SK-N-SH (cell line): ENCODE measurements at regions of chr2 and their contacts with region 1.

Region 1: DNA sequence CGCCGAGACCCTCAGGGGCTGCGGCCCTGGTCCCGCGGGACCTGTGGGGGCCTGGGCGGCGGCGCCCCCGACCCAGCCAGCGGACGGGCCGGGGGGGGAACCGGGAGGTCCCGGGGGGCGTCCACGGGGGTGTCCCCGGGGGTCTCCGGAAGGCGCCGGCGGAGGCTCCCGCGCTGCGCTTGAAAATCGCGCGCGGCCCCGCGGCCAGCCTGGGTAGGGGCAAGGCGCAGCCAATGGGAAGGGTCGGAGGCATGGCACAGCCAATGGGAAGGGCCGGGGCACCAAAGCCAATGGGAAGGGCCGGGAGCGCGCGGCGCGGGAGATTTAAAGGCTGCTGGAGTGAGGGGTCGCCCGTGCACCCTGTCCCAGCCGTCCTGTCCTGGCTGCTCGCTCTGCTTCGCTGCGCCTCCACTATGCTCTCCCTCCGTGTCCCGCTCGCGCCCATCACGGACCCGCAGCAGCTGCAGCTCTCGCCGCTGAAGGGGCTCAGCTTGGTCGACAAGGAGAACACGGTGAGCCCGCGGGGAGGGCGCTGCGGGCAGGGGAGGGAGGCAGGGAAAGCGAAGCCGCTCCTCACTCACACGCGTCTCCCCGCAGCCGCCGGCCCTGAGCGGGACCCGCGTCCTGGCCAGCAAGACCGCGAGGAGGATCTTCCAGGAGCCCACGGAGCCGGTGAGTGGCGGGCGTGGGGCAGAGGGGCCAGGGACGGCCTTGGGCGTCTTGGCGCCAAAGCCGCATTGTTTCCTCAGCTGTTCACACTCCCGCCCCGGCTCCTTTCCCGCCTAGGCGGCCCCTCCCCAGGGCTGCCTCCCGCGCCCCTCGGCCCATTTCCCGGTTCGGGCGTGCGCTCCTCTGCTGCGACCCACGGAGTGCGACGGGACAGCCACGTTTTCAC is at the start of gene RRM2:
- DNase-seq: peak; percentile 99
- H3K4me3 ChIP-seq: peak within 1 kb of the TSS; percentile 63 to 69
- H3K27ac ChIP-seq: peak within 1 kb of the TSS; percentile 84 to 87
- H3K4me1 ChIP-seq: peaks cover 12 to 30% of the 10 kb centered on the region in 2 experiments; a peak in 3 of 4 replicates
- H3K27me3 ChIP-seq: no peaks in the 10 kb centered on the region
- CTCF ChIP-seq: no peak
- EP300 ChIP-seq: no peak
- RAD21 ChIP-seq: no peak
- polyA plus RNA-seq, gene RRM2: 23.6 and 38.9 TPM in 2 replicates

Region 2: DNA sequence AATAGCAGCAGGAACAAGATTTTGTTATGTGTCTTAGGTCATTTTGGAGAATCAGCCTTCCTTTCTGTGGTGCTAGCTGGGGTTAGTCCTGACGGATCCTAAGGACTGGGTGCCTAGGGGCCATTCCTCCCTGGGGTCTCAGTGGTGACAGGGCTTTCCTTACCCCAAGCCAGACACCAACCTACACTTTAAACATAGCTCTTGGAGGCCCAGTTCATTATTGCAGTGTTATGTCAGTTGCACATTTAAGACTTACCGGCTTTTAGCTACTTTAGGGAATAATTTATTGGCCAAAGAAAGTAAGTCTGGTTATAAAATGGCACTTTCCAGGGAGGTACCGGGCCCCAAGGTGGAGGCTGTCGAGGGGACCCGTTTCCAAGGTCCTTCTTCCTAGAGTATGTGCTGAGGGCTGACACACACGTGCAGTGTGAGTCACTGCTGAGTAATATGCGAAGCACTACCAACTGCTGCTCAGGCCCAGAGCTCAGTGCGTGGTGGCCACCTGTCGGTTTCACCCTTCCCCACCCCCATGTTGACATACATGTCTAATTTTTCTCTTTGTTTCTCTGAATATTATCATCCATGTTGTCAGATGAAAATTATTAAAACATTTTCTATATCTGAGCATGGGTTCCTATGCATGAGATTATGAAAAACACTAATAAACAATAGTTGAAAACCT is 208.1 kb before region 1 on chr2:
- CTCF ChIA-PET with region 1: no interaction called
- POLR2A ChIA-PET with region 1: no interaction called
- DNase-seq: no peak
- H3K4me3 ChIP-seq: no peak overlapping the region
- H3K27ac ChIP-seq: no peak overlapping the region; a peak in 1 of 4 replicates
- H3K4me1 ChIP-seq: peaks cover 0 to 14% of the 10 kb centered on the region in 2 experiments; a peak in 2 of 4 replicates
- H3K27me3 ChIP-seq: no peaks in the 10 kb centered on the region
- CTCF ChIP-seq: peak; percentile 45
- EP300 ChIP-seq: 0 out of 4 replicates have a peak, but pooled peaks of 1 of the 2 experiments have one; percentile 27
- RAD21 ChIP-seq: no peak

Region 3: DNA sequence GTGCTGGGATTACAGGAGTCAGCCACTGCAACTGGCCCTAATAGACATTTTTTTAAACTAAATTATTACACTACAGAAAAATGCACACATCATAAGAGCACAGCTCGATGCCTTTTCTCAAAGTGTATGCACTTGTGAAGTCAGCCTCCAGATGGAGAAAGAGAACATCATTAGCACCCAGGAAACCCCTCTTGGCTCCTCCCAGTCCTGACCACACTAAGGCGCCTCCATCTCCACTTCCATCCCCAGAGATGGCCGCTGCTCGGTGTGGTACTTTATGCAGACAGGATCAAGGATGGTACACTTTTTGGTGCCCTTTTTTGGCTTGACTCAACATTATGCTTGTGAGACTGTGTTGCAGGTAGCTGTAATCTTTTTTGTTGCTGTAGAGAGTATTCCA is 34.7 kb after region 1 on chr2:
- CTCF ChIA-PET with region 1: interaction called, 13 read pairs
- POLR2A ChIA-PET with region 1: no interaction called
- DNase-seq: peak; percentile 50
- H3K4me3 ChIP-seq: no peak overlapping the region
- H3K27ac ChIP-seq: no peak overlapping the region
- H3K4me1 ChIP-seq: peaks cover 0 to 7% of the 10 kb centered on the region in 2 experiments; a peak in 1 of 4 replicates
- H3K27me3 ChIP-seq: no peaks in the 10 kb centered on the region
- CTCF ChIP-seq: peak; percentile 10; the same call in 1 of the 2 replicates
- EP300 ChIP-seq: no peak
- RAD21 ChIP-seq: no peak

Region 4: DNA sequence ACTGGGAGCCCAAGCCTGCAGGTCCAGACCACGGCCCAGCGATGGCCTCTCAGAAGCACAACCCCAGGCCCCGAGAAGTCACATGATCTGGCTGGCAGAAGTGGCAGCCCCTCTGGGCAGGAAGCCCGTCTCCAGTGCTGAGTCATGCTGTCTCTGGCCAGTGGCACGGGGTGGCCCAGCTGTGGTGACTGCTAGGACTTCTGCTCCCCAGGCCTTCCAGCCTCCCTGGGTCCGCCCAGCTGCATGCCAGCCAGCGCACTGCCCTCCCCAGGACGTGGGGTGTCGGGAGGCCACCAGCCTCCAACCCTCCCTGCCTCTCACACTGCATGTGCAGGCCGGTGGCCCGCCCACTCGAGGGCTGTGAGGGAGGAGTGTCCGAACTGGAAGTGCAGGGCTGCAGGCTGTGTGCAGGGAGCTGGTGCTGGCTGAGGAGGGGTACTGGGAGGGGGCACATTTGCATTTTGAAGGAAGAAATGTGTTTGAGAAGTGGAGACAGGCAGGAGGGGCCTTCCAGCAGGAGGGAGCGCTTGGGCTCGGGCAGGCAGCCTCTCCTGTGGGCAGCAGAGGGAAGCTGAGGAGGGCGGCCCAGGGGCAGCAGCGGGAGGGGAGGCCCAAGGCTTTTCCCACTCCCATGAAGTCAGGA is 163.0 kb after region 1 on chr2:
- CTCF ChIA-PET with region 1: interaction called, 19 read pairs
- POLR2A ChIA-PET with region 1: interaction called, 5 read pairs
- DNase-seq: peak; percentile 95
- H3K4me3 ChIP-seq: no peak overlapping the region
- H3K27ac ChIP-seq: peak overlapping the region; percentile 69 to 96
- H3K4me1 ChIP-seq: peaks cover 43 to 52% of the 10 kb centered on the region in 2 experiments
- H3K27me3 ChIP-seq: no peaks in the 10 kb centered on the region
- CTCF ChIP-seq: peak; percentile 17
- EP300 ChIP-seq: peak in 1 of 2 experiments; percentile 81; a peak in 1 of 4 replicates
- RAD21 ChIP-seq: no peak; the same call in none of the 2 replicates

Region 5: DNA sequence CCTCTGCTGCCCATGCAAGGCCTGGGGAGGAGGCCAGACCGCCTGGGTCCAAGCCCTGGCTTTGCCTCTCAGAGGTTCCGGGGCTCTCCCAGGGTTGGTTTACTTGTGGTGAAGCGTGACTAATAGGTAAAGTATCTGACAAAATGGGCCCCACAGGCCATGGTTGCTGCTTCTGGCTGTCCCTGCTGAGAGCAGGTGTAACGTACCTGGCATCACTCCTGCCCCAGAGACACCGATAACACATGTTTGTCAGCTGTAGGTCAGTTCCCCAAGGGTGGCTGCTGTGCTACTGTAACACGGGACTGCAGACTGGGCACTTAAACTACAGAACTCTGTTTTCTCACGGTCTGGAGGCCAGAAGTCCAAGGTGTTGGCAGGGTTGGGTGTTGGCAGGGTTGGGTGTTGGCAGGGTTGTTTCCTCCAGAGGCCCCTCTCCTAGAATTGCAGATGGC is 291.4 kb after region 1 on chr2:
- CTCF ChIA-PET with region 1: interaction called, 403 read pairs
- POLR2A ChIA-PET with region 1: interaction called, 3 read pairs
- DNase-seq: no peak
- H3K4me3 ChIP-seq: no peak overlapping the region
- H3K27ac ChIP-seq: no peak overlapping the region
- H3K4me1 ChIP-seq: peaks cover 5 to 34% of the 10 kb centered on the region in 2 experiments; a peak in 3 of 4 replicates
- H3K27me3 ChIP-seq: no peaks in the 10 kb centered on the region
- CTCF ChIP-seq: no peak
- EP300 ChIP-seq: no peak
- RAD21 ChIP-seq: no peak

Region 6: DNA sequence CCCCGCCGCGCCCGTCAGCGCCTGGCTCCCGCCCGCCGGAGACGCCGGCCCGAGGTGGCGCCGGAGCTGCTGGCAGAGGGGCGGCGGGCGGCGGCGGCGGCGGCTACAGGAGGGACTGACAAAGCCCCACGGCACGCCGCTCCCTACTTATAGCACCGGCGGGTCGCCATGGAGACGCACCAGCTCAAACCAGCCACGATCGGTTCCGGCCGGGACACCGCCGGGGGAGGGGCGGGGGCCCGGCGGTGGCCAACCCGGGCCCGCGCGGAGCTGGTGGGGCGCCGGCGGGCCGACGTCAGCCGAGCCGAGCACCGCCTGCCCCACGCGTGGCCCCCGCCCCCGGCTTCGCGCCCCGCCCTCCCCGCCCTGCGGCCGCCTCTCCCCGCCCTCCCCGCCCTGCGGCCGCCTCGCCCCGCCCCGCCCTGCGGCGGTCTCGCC is 325.6 kb after region 1 on chr2 and contains the start of gene ODC1:
- CTCF ChIA-PET with region 1: interaction called, 13 read pairs
- POLR2A ChIA-PET with region 1: interaction called, 6 read pairs
- DNase-seq: peak; percentile 99
- H3K4me3 ChIP-seq: peak within 1 kb of the TSS; percentile 76 to 88
- H3K27ac ChIP-seq: peak within 1 kb of the TSS; percentile 68 to 89
- H3K4me1 ChIP-seq: peaks cover 28 to 32% of the 10 kb centered on the region in 2 experiments
- H3K27me3 ChIP-seq: no peaks in the 10 kb centered on the region
- CTCF ChIP-seq: no peak
- EP300 ChIP-seq: peak in 1 of 2 experiments; percentile 18; a peak in 1 of 4 replicates
- RAD21 ChIP-seq: no peak
- polyA plus RNA-seq, gene ODC1: 253 and 273 TPM in 2 replicates